CD14-positive monocyte (primary cell): ENCODE measurements at regions of chr3 and their contacts with region 1.

Region 1: DNA sequence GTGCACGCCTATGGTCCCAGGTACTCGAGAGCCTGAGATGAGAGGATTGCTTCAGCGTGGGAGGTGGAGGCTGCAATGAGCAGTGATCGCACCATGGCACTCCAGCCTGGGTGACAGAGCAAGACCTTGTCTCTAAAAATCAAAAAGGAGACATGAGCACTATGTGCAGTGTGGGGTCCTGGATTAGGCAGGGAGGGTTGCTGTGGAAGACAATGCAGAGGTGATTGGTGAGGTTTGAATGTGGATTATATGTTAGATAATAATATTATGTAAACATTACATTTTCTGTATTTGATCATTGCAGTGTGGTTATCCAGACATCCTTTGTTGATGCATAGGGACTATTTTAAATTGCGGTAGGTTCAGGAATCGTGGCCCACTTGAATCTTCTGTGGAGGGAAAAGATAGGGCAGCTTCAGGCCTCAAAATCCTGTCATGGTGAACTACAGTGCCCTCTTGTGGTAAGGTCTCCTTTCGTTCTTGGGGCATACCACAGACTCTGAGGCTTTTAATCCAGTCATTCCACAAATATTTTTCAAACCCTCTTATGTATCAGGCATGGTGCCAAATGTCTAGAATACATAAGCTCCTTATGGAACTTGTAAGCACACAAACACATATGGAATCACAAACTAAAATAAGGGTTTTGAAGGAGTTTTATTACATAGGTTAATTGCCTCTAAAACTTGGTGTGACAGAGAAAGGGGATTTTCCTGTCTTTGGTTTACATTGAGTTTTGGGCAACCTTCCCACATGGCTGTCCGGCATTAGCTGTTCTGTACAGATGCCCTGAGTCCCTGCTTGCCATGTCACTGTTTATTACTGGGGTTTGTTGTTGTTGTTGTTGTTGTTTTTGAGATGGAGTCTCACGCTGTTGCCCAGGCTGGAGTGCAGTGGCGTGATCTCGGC is 37.7 kb downstream of the GPD1L start:
- DNase-seq: peak; percentile 41 to 59 (median 52)
- H3K4me3 ChIP-seq: no peak overlapping the region
- H3K4me3 Mint-ChIP-seq: no peak overlapping the region
- H3K27ac ChIP-seq: peak overlapping the region in 1 of 2 donors; percentile 53
- H3K27ac Mint-ChIP-seq: peak overlapping the region in 6 of 7 donors; percentile 33 to 97 (median 84)
- H3K4me1 ChIP-seq: peaks cover 29 to 35% of the 10 kb centered on the region in 2 donors
- H3K4me1 Mint-ChIP-seq: peaks cover 31% of the 10 kb centered on the region
- H3K27me3 ChIP-seq: no peaks in the 10 kb centered on the region
- H3K27me3 Mint-ChIP-seq: no peaks in the 10 kb centered on the region
- CTCF ChIP-seq: peak; percentile 87

Region 2: DNA sequence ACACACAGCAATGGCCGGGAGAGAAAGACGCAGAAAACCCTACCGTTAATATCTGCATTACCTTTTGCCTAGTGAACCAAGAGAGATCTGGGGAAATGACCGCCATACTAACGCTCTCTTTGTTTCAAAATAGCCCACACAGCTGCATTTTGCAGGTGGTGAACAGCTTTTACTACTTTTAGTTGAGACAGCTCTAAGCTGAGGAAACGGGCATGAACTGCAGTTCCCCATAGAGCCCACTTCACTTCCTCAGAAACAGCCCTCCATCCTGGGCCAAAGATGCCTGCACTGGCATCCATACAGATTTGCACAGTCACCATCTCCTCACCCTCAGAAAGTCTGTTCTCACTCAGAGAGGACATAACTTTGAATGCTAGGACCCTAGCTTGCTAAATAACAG is 117.5 kb before region 1 on chr3:
- intact Hi-C with region 1: loop called in 1 of 2 experiments (anchors 10 kb)
- DNase-seq: peak in 2 of 3 donors; percentile 2 to 11
- H3K4me3 ChIP-seq: no peak overlapping the region
- H3K4me3 Mint-ChIP-seq: peak overlapping the region; percentile 11 to 30
- H3K27ac ChIP-seq: no peak overlapping the region
- H3K27ac Mint-ChIP-seq: no peak overlapping the region
- H3K4me1 ChIP-seq: peaks cover 3 to 4% of the 10 kb centered on the region in 2 donors
- H3K4me1 Mint-ChIP-seq: peaks cover 7% of the 10 kb centered on the region
- H3K27me3 ChIP-seq: no peaks in the 10 kb centered on the region
- H3K27me3 Mint-ChIP-seq: no peaks in the 10 kb centered on the region
- CTCF ChIP-seq: no peak

Region 3: DNA sequence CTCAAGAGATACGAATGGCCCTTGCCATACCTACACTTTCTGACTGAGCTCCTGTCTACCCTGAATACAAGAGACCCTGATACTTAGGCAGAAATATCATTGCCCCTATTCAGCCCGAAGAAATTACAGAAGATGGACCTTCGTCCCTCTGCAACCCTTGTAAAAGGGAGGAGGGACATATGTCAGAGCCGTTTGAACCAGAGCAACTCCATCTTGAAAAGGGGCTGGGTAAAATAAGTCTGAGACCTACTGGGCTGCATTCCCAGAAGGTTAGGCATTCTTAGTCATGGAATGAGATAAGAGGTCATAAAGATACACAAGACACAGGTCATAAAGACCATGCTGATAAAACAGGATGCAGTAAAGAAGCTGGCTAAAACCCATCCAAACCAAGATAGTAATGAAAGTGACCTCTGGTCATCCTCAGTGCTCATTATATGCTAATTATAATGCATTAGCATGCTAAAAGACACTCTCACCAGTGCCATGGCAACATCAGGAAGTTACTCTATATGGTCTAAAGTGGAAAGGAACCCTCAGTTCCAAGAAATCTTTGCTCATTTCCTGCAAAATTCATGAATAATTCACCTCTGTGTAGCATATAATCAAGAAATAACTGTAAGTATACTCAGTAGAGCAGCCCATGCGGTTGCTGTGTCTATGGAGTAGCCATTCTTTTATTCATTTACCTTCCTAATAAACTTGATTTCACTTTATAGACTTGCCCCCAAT is 87.4 kb before region 1 on chr3:
- intact Hi-C with region 1: no loop called
- DNase-seq: no peak
- H3K4me3 ChIP-seq: no peak overlapping the region
- H3K4me3 Mint-ChIP-seq: no peak overlapping the region
- H3K27ac ChIP-seq: no peak overlapping the region
- H3K27ac Mint-ChIP-seq: no peak overlapping the region
- H3K4me1 ChIP-seq: no peaks in the 10 kb centered on the region
- H3K4me1 Mint-ChIP-seq: no peaks in the 10 kb centered on the region
- H3K27me3 ChIP-seq: no peaks in the 10 kb centered on the region
- H3K27me3 Mint-ChIP-seq: peaks cover 0 to 4% (median 2%) of the 10 kb centered on the region in 3 donors
- CTCF ChIP-seq: no peak